Naive thymus-derived CD4-positive, alpha-beta T cell (primary cell): ENCODE measurements at regions of chr9 and their contacts with region 1.

Region 1: GRCh38 chr9:97710356-97711222 is 13.4 kb upstream of the XPA start:
- DNase-seq: peak in 7 of 9 donors; percentile 32 to 65 (median 56)
- ATAC-seq: peak; percentile 92
- H3K4me3 ChIP-seq: no peak overlapping the region
- H3K4me3 Mint-ChIP-seq: peak overlapping the region in 5 of 10 donors; percentile 21 to 44 (median 38)
- H3K27ac ChIP-seq: no peak overlapping the region
- H3K27ac Mint-ChIP-seq: peak overlapping the region in 2 of 9 donors; percentile 6 to 46
- H3K4me1 ChIP-seq: peaks cover 17 to 18% of the 10 kb centered on the region in 2 donors
- H3K4me1 Mint-ChIP-seq: peaks cover 12 to 42% (median 22%) of the 10 kb centered on the region in 7 donors
- H3K27me3 ChIP-seq: no peaks in the 10 kb centered on the region
- H3K27me3 Mint-ChIP-seq: peaks cover 0 to 37% (median 13%) of the 10 kb centered on the region in 5 donors

Region 2: DNA sequence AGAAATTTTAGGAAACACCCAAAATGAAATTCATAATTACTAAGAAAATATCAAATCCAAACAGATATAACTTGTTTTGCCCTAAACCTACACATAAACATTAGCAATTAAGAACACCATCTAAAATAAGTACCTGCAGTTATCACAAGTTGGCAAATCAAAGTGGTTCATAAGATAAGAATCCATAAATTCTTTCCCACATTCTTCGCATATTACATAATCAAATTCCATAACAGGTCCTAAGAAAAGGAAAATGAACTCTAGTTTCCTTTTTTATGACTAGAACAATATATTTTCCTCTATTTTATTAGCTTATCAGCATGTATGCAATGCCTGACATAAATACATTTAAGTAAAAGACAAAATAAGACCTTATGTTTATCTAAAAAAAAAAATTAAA is 21.2 kb before region 1 on chr9:
- CTCF ChIA-PET with region 1: no interaction called
- POLR2A ChIA-PET with region 1: no interaction called
- intact Hi-C with region 1: no loop called
- DNase-seq: no peak
- ATAC-seq: no peak
- H3K4me3 ChIP-seq: no peak overlapping the region
- H3K4me3 Mint-ChIP-seq: no peak overlapping the region
- H3K27ac ChIP-seq: no peak overlapping the region
- H3K27ac Mint-ChIP-seq: peak overlapping the region in 5 of 9 donors; percentile 4 to 75 (median 41)
- H3K4me1 ChIP-seq: peaks cover 1 to 7% of the 10 kb centered on the region in 2 donors
- H3K4me1 Mint-ChIP-seq: peaks cover 13 to 44% (median 26%) of the 10 kb centered on the region in 7 donors
- H3K27me3 ChIP-seq: no peaks in the 10 kb centered on the region
- H3K27me3 Mint-ChIP-seq: no peaks in the 10 kb centered on the region

Region 3: GRCh38 chr9:97786341-97786740 is 75.8 kb after region 1 on chr9:
- CTCF ChIA-PET with region 1: no interaction called
- POLR2A ChIA-PET with region 1: no interaction called
- intact Hi-C with region 1: no loop called
- DNase-seq: no peak
- ATAC-seq: no peak
- H3K4me3 ChIP-seq: no peak overlapping the region
- H3K4me3 Mint-ChIP-seq: no peak overlapping the region
- H3K27ac ChIP-seq: no peak overlapping the region
- H3K27ac Mint-ChIP-seq: no peak overlapping the region
- H3K4me1 ChIP-seq: no peaks in the 10 kb centered on the region
- H3K4me1 Mint-ChIP-seq: no peaks in the 10 kb centered on the region
- H3K27me3 ChIP-seq: peaks cover 0 to 5% of the 10 kb centered on the region in 2 donors
- H3K27me3 Mint-ChIP-seq: peaks cover 5 to 23% (median 7%) of the 10 kb centered on the region in 5 donors

Region 4: DNA sequence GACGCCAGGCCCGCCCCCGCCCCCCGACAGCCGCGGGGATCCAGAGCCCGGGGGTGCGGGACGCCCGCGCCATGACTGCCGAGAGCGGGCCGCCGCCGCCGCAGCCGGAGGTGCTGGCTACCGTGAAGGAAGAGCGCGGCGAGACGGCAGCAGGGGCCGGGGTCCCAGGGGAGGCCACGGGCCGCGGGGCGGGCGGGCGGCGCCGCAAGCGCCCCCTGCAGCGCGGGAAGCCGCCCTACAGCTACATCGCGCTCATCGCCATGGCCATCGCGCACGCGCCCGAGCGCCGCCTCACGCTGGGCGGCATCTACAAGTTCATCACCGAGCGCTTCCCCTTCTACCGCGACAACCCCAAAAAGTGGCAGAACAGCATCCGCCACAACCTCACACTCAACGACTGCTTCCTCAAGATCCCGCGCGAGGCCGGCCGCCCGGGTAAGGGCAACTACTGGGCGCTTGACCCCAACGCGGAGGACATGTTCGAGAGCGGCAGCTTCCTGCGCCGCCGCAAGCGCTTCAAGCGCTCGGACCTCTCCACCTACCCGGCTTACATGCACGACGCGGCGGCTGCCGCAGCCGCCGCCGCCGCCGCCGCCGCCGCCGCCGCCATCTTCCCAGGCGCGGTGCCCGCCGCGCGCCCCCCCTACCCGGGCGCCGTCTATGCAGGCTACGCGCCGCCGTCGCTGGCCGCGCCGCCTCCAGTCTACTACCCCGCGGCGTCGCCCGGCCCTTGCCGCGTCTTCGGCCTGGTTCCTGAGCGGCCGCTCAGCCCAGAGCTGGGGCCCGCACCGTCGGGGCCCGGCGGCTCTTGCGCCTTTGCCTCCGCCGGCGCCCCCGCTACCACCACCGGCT is 143.5 kb after region 1 on chr9:
- CTCF ChIA-PET with region 1: no interaction called
- POLR2A ChIA-PET with region 1: no interaction called
- intact Hi-C with region 1: loop called in 1 of 2 experiments (anchors 1 kb)
- DNase-seq: peak; percentile 47 to 72 (median 59)
- ATAC-seq: peak; percentile 87
- H3K4me3 ChIP-seq: peak overlapping the region; percentile 51
- H3K4me3 Mint-ChIP-seq: peak overlapping the region; percentile 85 to 93 (median 90)
- H3K27ac ChIP-seq: no peak overlapping the region
- H3K27ac Mint-ChIP-seq: peak overlapping the region in 6 of 9 donors; percentile 1 to 91 (median 73)
- H3K4me1 ChIP-seq: peaks cover 5 to 18% of the 10 kb centered on the region in 2 donors
- H3K4me1 Mint-ChIP-seq: peaks cover 9 to 39% (median 21%) of the 10 kb centered on the region in 7 donors
- H3K27me3 ChIP-seq: peaks cover 12 to 54% of the 10 kb centered on the region in 2 donors
- H3K27me3 Mint-ChIP-seq: peaks cover 62 to 86% (median 71%) of the 10 kb centered on the region in 5 donors

Region 5: DNA sequence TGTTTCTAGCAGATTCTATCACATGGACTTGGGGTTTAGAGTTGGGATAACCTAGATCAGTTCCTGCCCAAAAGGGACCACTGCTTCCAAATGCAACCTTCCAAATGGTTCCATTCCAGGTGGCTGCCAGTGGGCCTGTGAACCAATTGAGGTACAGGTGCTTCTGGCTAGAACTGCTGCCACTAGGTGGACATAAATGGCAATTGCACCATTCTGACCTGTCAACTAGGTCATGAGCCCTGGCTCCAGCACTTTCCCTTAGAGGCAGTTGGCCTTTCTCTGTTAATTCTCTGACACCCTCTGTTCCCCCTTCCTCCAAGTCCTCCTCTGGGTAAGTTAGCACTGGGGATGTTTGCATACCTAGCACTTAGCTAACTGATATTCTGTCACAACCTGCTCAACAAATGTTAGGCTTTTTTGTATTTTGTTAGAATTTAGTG is 244.0 kb after region 1 on chr9:
- CTCF ChIA-PET with region 1: no interaction called
- POLR2A ChIA-PET with region 1: no interaction called
- intact Hi-C with region 1: loop called (anchors 1 to 2 kb)
- DNase-seq: peak in 8 of 9 donors; percentile 34 to 69 (median 60)
- ATAC-seq: peak; percentile 90
- H3K4me3 ChIP-seq: no peak overlapping the region
- H3K4me3 Mint-ChIP-seq: no peak overlapping the region
- H3K27ac ChIP-seq: no peak overlapping the region
- H3K27ac Mint-ChIP-seq: peak overlapping the region in 4 of 9 donors; percentile 14 to 78 (median 44)
- H3K4me1 ChIP-seq: peaks cover 0 to 10% of the 10 kb centered on the region in 2 donors
- H3K4me1 Mint-ChIP-seq: peaks cover 0 to 13% (median 9%) of the 10 kb centered on the region in 7 donors
- H3K27me3 ChIP-seq: no peaks in the 10 kb centered on the region
- H3K27me3 Mint-ChIP-seq: peaks cover 0 to 18% (median 0%) of the 10 kb centered on the region in 5 donors

Region 6: GRCh38 chr9:98263482-98264357 is 553.1 kb after region 1 on chr9:
- CTCF ChIA-PET with region 1: no interaction called
- POLR2A ChIA-PET with region 1: no interaction called
- intact Hi-C with region 1: loop called (anchors 1 to 2 kb)
- DNase-seq: peak; percentile 54 to 82 (median 77)
- ATAC-seq: peak; percentile 100
- H3K4me3 ChIP-seq: no peak overlapping the region
- H3K4me3 Mint-ChIP-seq: no peak overlapping the region
- H3K27ac ChIP-seq: no peak overlapping the region
- H3K27ac Mint-ChIP-seq: peak overlapping the region in 1 of 9 donors; percentile 59
- H3K4me1 ChIP-seq: no peaks in the 10 kb centered on the region
- H3K4me1 Mint-ChIP-seq: peaks cover 0 to 3% (median 0%) of the 10 kb centered on the region in 7 donors
- H3K27me3 ChIP-seq: no peaks in the 10 kb centered on the region
- H3K27me3 Mint-ChIP-seq: peaks cover 0 to 23% (median 0%) of the 10 kb centered on the region in 5 donors